ENCODE measurements at regions of chr15 and their contacts with region 1.

Region 1: GRCh38 chr15:95864467-95864886 is 466.0 kb upstream of the NR2F2 start:
- DNase-seq: no peak
- H3K4me3 ChIP-seq: no peak overlapping the region
- H3K27ac ChIP-seq: no peak overlapping the region
- H3K4me1 ChIP-seq: no peaks in the 10 kb centered on the region
- H3K27me3 ChIP-seq: no peaks in the 10 kb centered on the region
- CTCF ChIP-seq: no peak

Region 2: DNA sequence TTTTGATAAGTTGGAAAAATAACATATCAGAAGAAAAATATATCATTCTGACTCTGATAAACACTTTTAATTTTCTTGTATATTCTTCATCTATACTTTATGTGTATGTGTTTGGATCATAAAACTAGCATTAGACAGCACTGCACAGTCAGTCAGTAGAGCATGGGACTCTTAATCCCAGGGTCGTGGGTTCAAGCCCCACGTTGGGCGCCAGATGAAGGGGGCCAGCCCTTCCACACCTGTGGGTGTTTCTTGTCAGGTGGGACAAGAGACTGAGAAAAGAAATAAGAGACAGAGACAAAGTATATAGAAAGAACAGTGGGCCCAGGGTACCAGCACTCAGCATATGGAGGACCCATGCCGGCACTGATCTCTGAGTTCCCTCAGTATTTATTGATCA is 80.0 kb before region 1 on chr15:
- CTCF ChIA-PET with region 1: no interaction called
- dilution Hi-C with region 1: loop called (anchors 10 kb)
- in situ Hi-C with region 1: no loop called
- intact Hi-C with region 1: no loop called
- DNase-seq: no peak
- H3K4me3 ChIP-seq: no peak overlapping the region
- H3K27ac ChIP-seq: no peak overlapping the region
- H3K4me1 ChIP-seq: no peaks in the 10 kb centered on the region
- H3K27me3 ChIP-seq: no peaks in the 10 kb centered on the region
- CTCF ChIP-seq: no peak

Region 3: GRCh38 chr15:95829062-95829461 is 35.4 kb before region 1 on chr15:
- CTCF ChIA-PET with region 1: no interaction called
- dilution Hi-C with region 1: no loop called
- in situ Hi-C with region 1: no loop called
- intact Hi-C with region 1: no loop called
- DNase-seq: no peak
- H3K4me3 ChIP-seq: no peak overlapping the region
- H3K27ac ChIP-seq: no peak overlapping the region
- H3K4me1 ChIP-seq: no peaks in the 10 kb centered on the region
- H3K27me3 ChIP-seq: peaks cover 3% of the 10 kb centered on the region
- CTCF ChIP-seq: no peak

Measured in mammary epithelial cell (primary cell).